ENCODE measurements at regions of chr2 and their contacts with region 1.

Region 1: GRCh38 chr2:68925295-68925896 is 27.3 kb downstream of the GKN2 start:
- DNase-seq: peak; percentile 68 to 78
- ATAC-seq: peak; percentile 72 to 86; a peak in 5 of 6 replicates
- H3K4me3 ChIP-seq: no peak overlapping the region
- H3K27ac ChIP-seq: peak overlapping the region in 1 of 2 experiments; percentile 72; a peak in 2 of 6 replicates
- H3K4me1 ChIP-seq: peaks cover 23% of the 10 kb centered on the region
- CTCF ChIP-seq: peak; percentile 98
- EP300 ChIP-seq: no peak
- POLR2A ChIP-seq: no peak
- RAD21 ChIP-seq: peak; percentile 97

Region 2: DNA sequence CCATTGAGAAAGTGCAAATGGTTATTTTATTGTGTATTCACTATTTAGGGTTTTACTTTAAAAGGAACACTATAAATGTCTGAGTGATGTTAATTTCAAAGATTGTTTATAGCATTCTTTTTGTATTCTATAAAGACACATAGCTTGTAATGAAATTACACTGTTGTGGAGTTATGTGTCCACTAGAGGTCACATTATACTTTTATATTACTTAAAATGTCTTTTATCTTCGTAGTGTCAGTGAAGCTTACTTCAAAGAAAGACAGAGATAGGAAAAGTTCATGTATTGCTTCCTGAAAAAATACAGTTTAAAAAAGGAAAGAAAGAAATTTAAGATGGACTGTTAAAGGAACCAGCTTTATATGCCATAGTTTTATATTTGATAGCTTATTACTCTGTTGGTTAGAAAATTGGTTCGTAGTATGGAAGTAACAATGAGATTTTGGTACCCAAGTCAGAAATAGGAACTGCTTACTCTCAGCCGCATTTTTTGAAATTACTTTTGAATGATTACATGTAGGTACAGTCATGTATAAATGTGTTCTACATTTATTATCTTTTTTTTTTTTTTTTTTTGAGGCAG is 437.5 kb before region 1 on chr2:
- CTCF ChIA-PET with region 1: interaction called, 49 read pairs
- POLR2A ChIA-PET with region 1: no interaction called
- DNase-seq: peak; percentile 21 to 41
- ATAC-seq: peak in 1 of 2 experiments; percentile 82; a peak in 4 of 6 replicates
- H3K4me3 ChIP-seq: no peak overlapping the region
- H3K27ac ChIP-seq: no peak overlapping the region
- H3K4me1 ChIP-seq: no peaks in the 10 kb centered on the region
- CTCF ChIP-seq: peak; percentile 71; the same call in 2 of the 3 replicates
- EP300 ChIP-seq: no peak
- POLR2A ChIP-seq: no peak
- RAD21 ChIP-seq: peak; percentile 65 to 74

Region 3: GRCh38 chr2:68715353-68716041 is 209.9 kb before region 1 on chr2:
- CTCF ChIA-PET with region 1: interaction called, 96 read pairs
- POLR2A ChIA-PET with region 1: no interaction called
- DNase-seq: peak; percentile 76 to 81
- ATAC-seq: peak; percentile 96 to 99
- H3K4me3 ChIP-seq: no peak overlapping the region
- H3K27ac ChIP-seq: no peak overlapping the region
- H3K4me1 ChIP-seq: no peaks in the 10 kb centered on the region; the same call in 2 of the 3 replicates
- CTCF ChIP-seq: peak; percentile 81
- EP300 ChIP-seq: no peak
- POLR2A ChIP-seq: no peak
- RAD21 ChIP-seq: peak; percentile 60 to 67

Region 4: DNA sequence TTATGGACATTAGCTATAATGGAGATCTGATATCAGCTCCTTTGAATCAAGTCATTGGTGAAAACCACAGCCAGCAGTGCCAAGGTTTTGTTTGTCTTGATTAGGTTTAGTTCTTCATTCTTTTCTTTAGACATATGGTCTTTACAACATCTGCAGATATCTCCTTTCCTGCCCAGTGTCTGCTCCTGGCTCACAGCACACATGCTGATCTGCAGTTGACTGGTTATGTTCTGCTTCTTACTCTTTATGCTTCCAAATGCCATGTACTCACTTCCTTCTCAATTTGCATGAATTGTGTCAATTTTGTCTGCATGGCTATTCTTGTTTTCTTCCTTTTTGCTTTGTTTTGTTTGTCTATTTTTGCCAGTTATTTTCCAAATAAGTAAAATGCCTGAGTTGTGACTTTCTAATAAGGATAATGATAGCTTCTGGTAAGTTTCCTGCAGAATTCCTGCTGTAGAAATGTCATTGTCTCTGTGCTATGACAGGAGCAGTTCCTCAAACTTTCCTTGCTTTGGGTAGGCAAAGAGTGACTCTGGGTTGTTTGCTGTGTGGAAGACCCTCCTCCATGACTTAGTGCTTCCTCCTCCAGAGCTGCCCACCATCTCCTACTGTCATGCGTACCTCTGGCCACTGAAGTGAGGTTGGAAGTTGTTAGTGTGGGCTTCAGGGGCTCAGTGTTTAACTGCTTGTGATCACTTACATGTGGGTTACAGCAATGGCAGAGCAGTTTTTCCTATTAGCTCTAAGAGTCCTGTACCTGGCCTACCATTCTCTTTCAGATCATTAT is 182.6 kb before region 1 on chr2:
- CTCF ChIA-PET with region 1: interaction called, 227 read pairs
- POLR2A ChIA-PET with region 1: no interaction called
- DNase-seq: no peak
- ATAC-seq: no peak
- H3K4me3 ChIP-seq: no peak overlapping the region
- H3K27ac ChIP-seq: no peak overlapping the region
- H3K4me1 ChIP-seq: no peaks in the 10 kb centered on the region
- CTCF ChIP-seq: no peak
- EP300 ChIP-seq: no peak
- POLR2A ChIP-seq: no peak
- RAD21 ChIP-seq: no peak

Region 5: GRCh38 chr2:68837164-68837860 is 88.1 kb before region 1 on chr2:
- CTCF ChIA-PET with region 1: interaction called, 15 read pairs
- POLR2A ChIA-PET with region 1: no interaction called
- DNase-seq: peak; percentile 66 to 76
- ATAC-seq: peak; percentile 86 to 96
- H3K4me3 ChIP-seq: no peak overlapping the region
- H3K27ac ChIP-seq: no peak overlapping the region
- H3K4me1 ChIP-seq: peaks cover 5% of the 10 kb centered on the region; the same call in 2 of the 3 replicates
- CTCF ChIP-seq: peak; percentile 78
- EP300 ChIP-seq: no peak
- POLR2A ChIP-seq: no peak
- RAD21 ChIP-seq: peak; percentile 50 to 51; a peak in 4 of 5 replicates

Region 6: DNA sequence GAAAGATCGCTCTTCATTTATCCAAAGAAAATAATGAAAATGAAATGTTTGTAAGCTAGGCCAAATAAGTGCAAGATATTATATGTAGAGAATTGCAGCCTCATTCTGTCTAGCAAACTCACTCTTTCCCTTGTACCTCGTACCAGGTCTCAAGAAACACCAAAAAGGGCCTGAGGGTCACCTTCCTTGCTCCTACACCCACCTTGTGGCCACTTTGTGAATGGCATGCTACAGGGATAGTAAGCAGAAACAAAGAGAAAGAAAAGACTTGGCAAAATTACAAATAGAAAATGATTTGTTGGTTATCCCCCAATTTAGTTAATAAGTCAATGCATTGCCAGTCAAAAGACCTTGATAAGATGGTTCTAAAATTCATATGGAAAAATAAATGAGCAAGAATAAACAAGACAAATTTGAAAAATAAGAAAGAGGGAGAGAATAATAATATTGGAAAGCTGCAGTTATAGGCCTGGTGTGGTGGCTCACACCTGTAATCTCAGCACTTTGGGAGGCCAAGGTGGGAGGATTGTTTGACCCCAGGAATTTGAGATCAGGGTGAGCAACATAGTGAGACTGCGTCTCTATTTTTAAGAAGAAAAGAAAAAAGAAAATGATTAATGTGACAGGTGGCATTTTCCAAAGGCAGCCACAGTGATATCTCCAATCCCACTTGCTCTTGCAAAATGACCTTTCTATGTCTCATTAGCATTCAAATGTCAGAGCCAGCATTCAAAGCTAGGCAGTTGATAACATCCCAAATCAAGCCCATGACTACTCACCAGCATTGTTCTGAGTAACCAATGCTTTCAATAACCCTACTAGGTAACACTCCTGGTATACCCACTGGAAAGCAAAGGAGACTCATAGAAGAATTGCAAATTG is 15.4 kb before region 1 on chr2:
- CTCF ChIA-PET with region 1: interaction called, 44 read pairs
- POLR2A ChIA-PET with region 1: no interaction called
- DNase-seq: peak; percentile 60 to 85
- ATAC-seq: peak in 1 of 2 experiments; percentile 66; a peak in 3 of 6 replicates
- H3K4me3 ChIP-seq: no peak overlapping the region
- H3K27ac ChIP-seq: peak overlapping the region in 1 of 2 experiments; percentile 85; a peak in 4 of 6 replicates
- H3K4me1 ChIP-seq: peaks cover 25% of the 10 kb centered on the region
- CTCF ChIP-seq: peak; percentile 79
- EP300 ChIP-seq: no peak
- POLR2A ChIP-seq: no peak
- RAD21 ChIP-seq: peak; percentile 76 to 80

Region 7: DNA sequence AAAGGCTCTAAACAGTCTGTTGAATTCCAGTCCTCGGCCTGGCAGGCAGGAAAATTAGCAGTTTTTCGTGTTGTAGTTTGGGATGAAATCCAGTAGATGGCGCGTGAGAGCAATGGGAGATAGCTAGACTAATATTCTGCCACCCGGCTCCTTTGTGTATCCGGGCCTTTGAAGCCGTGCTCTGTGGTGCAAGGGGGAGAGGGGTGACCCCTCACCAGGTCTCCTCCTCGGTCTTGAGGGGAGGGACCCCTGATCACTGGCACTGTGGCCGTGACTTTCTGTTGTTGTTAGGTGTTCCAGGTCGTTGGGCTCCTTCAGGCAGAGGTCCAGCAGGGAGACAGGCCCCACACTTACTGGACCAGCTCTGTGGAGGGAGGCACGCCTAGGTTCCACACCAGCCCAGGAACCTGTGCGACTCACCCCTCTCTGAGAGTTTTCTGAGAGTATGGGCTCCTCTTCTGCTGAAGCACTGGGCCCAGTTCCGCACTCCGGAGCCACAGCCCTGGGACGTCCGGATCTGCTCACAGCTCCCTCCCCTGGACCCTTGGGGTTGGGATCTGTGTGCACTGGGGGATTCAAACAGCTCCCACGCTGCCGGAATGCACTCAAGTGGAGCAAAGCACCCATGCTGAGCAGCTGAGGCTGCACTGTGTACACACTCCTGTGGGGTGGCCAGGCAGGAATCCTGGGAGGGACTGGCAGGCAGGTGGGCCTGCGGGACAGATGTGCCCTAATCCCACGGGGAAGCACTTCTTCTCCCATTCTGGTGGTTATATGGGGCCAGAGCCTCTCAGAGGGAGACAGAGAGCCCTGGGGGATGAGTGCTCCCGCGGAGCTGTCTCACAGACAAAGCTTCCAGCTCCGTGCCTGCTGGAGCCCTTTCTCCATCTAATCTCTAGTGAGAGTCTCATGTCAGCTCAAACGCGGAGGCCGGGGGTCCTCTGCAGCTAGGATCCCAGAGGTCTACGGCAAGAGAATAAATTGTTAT is 18.5 kb after region 1 on chr2:
- CTCF ChIA-PET with region 1: interaction called, 61 read pairs
- POLR2A ChIA-PET with region 1: no interaction called
- DNase-seq: peak; percentile 66 to 79
- ATAC-seq: peak; percentile 95 to 96
- H3K4me3 ChIP-seq: no peak overlapping the region
- H3K27ac ChIP-seq: peak overlapping the region; percentile 68 to 87
- H3K4me1 ChIP-seq: peaks cover 5% of the 10 kb centered on the region; the same call in 2 of the 3 replicates
- CTCF ChIP-seq: peak; percentile 91
- EP300 ChIP-seq: no peak; a peak in 1 of 5 replicates
- POLR2A ChIP-seq: no peak
- RAD21 ChIP-seq: peak; percentile 91 to 93

Measured in A549 (cell line).